ENCODE measurements at regions of chr3 and their contacts with region 1.

Region 1: GRCh38 chr3:112111785-112112402 is 21.2 kb downstream of the GCSAM start:
- DNase-seq: no peak
- ATAC-seq: peak; percentile 87

Region 2: DNA sequence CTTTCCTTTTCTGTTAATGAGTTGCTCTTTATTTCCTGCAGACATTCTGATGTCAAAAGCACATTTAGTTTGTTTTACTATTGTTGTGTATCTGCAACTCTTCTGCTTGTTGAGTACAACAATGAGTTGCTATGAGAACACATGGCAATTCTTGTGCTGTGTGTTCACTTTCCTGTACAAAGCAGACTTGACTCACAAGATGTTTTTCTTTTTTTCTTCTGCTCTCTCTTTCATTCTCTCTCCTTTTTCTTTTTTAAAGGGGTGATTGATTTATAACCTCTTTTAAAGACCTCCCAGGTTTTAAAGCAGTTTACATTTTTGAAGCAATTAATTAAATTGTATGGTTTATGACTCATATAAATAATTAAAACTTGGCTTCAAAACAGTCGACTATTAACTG is 164.7 kb before region 1 on chr3:
- intact Hi-C with region 1: no loop called
- DNase-seq: no peak
- ATAC-seq: no peak

Region 3: GRCh38 chr3:112013058-112013783 is 98.7 kb before region 1 on chr3:
- intact Hi-C with region 1: no loop called
- DNase-seq: peak; percentile 59
- ATAC-seq: peak; percentile 93

Region 4: GRCh38 chr3:112531358-112531781 is 419.5 kb after region 1 on chr3:
- intact Hi-C with region 1: loop called (anchors 10 kb)
- DNase-seq: no peak
- ATAC-seq: no peak